Cardiac septum (tissue), 1 donor: ENCODE measurements at regions of chr22 and their contacts with region 1.

Region 1: DNA sequence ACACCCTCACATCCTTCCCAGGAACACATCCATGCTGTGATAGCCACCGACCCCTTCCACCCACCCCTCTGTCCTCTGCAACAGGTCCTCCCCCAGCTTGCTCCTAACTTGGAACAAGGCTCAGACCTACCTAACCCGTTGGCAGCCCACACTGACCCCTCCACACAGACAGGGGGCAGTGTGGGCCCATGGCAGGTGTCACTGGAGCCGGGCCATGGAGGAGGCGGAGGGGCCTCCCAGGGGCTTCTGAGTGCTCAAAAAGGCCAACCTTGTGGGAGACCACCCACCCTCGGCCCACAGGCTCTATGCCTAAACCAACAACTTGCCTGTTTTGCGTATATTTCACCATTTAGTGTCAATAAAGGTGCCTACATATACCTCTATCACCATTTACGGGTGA is 57.0 kb downstream of the CERK start:
- DNase-seq: no peak

Region 2: DNA sequence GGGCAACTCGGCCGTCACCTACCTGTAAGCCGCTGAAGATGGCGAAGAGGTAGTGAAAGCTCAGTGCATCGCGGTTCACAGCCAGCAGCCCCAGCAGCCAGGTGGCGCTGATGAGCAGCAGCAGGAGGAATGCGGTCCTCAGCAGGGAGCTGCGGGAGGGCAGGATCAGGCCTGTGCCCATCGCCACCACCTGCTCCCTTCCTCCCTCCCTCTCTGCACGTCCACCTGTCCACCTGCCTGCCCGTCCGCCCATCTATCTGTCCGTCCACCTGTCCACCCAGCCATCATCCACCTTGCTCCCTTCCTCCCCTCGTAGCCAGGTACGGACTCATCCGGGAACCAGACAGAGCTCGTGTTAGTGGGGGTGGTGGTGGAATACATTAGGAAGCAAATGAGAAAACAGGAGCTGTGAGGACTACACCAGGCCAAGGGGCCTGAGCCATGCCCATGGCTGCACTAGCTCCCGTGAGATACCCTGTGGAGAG is 313.3 kb before region 1 on chr22:
- intact Hi-C with region 1: loop called (anchors 10 kb)
- DNase-seq: no peak

Region 3: GRCh38 chr22:46649141-46650077 is 31.6 kb before region 1 on chr22:
- intact Hi-C with region 1: loop called (anchors 5 kb)
- DNase-seq: peak; percentile 80